Activated CD8-positive, alpha-beta T cell treated with anti-CD3 and anti-CD28 coated beads, Interleukin-2, amount 10 ng/mL, durations not matched to agents 7 days and 5 days (primary cell): ENCODE measurements at regions of chr10 and their contacts with region 1.

Region 1: DNA sequence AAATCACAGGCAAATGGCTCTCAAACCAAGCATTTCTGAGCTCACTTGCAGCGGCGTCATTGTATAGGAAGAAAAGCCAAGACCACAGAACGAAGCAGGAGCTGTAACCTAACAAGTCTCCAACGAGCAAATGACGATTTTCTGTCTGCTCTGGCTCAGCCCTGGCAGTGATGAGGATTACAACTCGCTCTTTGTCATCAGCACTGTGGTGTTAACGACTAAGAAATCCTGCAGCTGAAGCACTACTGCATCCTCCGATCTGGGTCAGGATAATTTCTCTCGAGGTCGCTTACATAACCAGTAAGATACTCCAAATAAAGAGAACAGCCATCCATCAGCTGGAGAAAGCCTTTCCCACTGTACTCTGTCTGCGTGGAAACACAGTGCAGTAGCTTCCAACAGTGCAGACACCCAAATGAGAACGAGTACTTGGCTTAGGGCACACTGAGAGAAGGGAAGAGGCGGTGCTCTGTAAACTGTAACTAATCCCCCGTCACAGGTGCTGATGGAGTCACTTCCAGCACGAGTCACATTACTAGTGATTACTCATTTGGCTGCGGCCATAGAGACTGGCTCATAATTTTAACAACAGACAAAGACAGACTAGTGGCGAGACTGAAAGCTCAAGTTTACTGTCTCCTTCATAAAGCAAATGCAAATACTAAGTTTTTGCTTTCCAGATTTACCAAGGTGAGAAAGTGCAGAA is 135.8 kb downstream of the NRBF2 start:
- DNase-seq: peak; percentile 91
- ATAC-seq: peak; percentile 94
- H3K4me3 Mint-ChIP-seq: peak overlapping the region; percentile 97
- H3K27ac Mint-ChIP-seq: peak overlapping the region; percentile 99
- H3K4me1 Mint-ChIP-seq: peaks cover 18% of the 10 kb centered on the region
- H3K27me3 Mint-ChIP-seq: no peaks in the 10 kb centered on the region

Region 2: GRCh38 chr10:63054889-63055611 is 213.9 kb before region 1 on chr10:
- CTCF ChIA-PET with region 1: no interaction called
- POLR2A ChIA-PET with region 1: no interaction called
- DNase-seq: no peak
- ATAC-seq: no peak
- H3K4me3 Mint-ChIP-seq: no peak overlapping the region
- H3K27ac Mint-ChIP-seq: no peak overlapping the region
- H3K4me1 Mint-ChIP-seq: no peaks in the 10 kb centered on the region
- H3K27me3 Mint-ChIP-seq: peaks cover 10% of the 10 kb centered on the region

Region 3: DNA sequence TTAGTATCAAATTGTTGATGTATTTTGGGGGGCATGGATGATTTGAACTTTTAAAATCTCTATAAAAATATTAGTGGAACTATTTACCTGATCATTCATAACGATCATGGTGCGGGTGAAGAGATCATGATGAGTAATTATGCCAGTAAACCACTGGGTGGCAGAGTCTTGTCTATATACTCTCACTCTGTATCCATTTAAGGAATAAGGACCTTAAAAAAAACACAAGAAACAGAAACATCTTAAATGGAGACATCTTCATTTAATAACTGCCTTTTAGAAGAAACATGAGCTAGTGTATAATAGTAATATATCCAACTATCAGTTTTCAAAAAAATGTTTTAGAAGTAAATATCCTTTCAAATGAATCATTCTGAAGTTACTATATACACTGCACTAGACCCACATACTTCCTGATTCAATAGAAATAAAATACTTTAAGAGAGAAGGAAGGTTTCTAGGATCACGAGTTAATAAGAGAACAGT is 51.8 kb before region 1 on chr10:
- CTCF ChIA-PET with region 1: interaction called, 14 read pairs
- POLR2A ChIA-PET with region 1: interaction called, 15 read pairs
- DNase-seq: peak; percentile 46
- ATAC-seq: peak; percentile 81
- H3K4me3 Mint-ChIP-seq: no peak overlapping the region
- H3K27ac Mint-ChIP-seq: no peak overlapping the region
- H3K4me1 Mint-ChIP-seq: peaks cover 45% of the 10 kb centered on the region
- H3K27me3 Mint-ChIP-seq: no peaks in the 10 kb centered on the region

Region 4: DNA sequence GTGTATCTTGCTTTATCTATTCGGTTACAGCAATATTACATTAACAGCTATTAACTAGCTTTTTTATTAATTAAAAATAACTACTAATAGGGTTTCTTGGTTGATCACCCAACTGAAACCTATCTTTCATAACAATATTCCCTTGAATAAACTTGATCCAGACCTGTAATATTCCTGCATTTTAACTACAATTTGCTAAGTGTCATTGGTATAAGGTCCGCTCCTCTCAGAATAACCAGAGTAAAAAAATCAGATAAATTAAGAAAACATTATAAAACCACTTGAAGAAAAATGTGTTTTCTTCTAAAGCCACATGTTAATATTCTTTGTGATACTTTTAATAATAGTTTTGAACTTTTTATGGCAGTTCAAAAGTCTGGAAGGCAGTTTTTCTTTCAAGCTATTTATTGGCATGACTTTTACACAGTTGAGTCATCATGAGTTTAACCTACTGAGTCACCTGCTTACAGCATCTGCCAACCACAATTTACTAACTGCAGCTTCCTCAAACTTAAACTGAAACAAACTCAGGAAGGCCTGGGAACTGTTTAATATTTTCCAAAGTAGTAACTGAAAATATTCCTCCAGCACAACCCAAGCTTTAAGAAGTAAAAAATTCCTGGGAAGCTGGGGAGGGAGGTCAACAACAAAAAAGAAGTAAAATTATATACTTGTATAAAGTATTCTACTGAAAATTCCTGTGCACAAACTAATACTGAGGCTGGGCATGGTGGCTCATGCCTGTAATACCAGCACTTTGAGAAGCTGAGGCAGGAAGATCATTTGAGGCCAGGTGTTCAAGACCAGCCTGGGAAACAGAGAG is 32.6 kb before region 1 on chr10:
- CTCF ChIA-PET with region 1: interaction called, 7 read pairs
- POLR2A ChIA-PET with region 1: interaction called, 18 read pairs
- DNase-seq: peak; percentile 34
- ATAC-seq: peak; percentile 91
- H3K4me3 Mint-ChIP-seq: peak overlapping the region; percentile 18
- H3K27ac Mint-ChIP-seq: peak overlapping the region; percentile 57
- H3K4me1 Mint-ChIP-seq: peaks cover 52% of the 10 kb centered on the region
- H3K27me3 Mint-ChIP-seq: no peaks in the 10 kb centered on the region

Region 5: DNA sequence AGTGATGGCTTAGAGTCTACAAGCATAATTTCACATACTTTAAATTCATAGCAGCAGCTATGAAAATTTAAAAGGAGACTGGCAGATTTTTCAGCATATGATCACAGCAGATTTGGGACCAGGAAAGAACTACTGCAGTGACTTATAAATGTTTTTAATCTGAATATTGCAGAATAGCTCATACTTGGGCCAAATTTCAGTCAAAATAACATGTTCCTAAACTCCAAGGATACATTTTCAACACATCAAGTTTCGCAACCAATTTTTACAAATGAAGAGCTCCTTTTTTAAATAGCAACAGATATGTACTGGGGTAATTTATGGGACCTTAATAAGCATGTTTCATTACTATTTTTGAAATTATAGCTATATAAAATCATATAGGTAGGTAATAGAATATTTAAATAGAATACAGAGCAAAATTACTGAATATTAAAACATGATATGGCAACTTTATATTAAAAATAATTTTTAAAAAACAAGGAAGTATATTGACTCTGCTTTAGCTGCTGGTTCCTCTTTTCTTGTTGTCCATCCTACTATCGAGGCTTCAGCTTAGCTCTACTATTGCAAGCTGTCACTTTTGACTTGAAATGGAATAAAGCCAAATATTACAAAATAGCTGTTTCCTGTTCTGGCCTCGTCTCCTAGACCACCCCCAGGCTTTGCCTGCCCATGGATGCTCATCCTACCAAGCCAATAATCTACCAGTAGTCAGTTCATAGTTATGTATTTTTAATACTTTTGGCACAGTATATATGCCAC is 12.8 kb before region 1 on chr10:
- CTCF ChIA-PET with region 1: interaction called, 7 read pairs
- POLR2A ChIA-PET with region 1: interaction called, 10 read pairs
- DNase-seq: no peak
- ATAC-seq: no peak
- H3K4me3 Mint-ChIP-seq: no peak overlapping the region
- H3K27ac Mint-ChIP-seq: no peak overlapping the region
- H3K4me1 Mint-ChIP-seq: peaks cover 58% of the 10 kb centered on the region
- H3K27me3 Mint-ChIP-seq: no peaks in the 10 kb centered on the region

Region 6: DNA sequence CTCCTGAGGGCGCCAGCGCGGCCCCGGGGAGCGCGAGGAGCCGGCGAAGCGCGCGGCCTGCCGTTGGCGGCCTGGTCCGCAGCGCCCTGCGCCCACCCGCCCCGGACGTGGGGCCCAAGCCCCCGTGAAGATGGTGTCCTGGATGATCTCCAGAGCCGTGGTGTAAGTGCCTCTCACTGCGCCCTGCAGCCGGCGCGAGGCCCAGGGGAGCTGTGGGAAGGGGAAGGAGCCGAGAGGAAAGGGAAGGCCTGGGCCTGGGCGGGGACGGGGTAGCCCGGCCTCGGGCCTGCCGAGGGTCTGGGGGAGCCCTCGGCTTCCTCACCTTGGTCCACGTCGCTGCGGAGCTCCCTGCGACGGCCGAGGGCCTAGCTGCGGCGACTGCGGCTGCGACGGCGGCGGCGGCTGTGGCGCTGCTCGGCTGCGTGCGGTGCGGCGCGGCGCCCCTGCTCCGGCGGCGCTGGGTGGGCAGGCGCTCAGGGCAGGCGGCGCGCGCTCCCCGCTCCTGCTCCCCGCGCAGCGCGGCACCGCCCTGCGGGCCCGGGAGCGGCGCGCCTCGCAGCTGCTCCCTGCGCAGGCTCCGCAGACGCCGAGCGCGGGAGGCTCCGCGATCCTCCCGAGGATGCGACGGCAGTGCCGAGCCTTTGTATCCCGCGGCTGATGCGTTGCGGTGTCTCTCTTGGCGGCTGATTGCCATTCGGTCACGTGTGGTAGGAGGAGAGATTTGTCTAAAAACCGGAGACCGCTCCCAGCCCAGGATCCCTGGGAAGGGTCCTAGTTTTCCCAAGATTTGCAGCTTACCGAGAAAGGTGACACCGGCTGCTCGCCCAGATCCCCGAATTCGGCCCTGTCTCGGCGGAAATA is 252.7 kb after region 1 on chr10:
- CTCF ChIA-PET with region 1: no interaction called
- POLR2A ChIA-PET with region 1: interaction called, 28 read pairs
- DNase-seq: peak; percentile 56
- ATAC-seq: peak; percentile 77
- H3K4me3 Mint-ChIP-seq: peak overlapping the region; percentile 87
- H3K27ac Mint-ChIP-seq: peak overlapping the region; percentile 91
- H3K4me1 Mint-ChIP-seq: peaks cover 61% of the 10 kb centered on the region
- H3K27me3 Mint-ChIP-seq: no peaks in the 10 kb centered on the region